Heart right ventricle (tissue), 16 donors: ENCODE measurements at regions of chr14 and their contacts with region 1.

Region 1: GRCh38 chr14:67695394-67695949 is at the start of gene RDH11:
- DNase-seq: peak; percentile 73 to 86
- ATAC-seq: peak; percentile 97 to 99 (median 99)
- H3K4me3 ChIP-seq: peak within 1 kb of the TSS; percentile 42 to 93 (median 85)
- H3K27ac ChIP-seq: peak within 1 kb of the TSS in 9 of 10 donors; percentile 42 to 83 (median 75)
- H3K4me1 ChIP-seq: peaks cover 0 to 22% (median 4%) of the 10 kb centered on the region in 9 donors
- H3K27me3 ChIP-seq: no peaks in the 10 kb centered on the region
- CTCF ChIP-seq: no peak
- total RNA-seq, gene RDH11: 9.6 to 19.8 (median 14.7) TPM

Region 2: GRCh38 chr14:67541448-67542387 is 153.8 kb before region 1 on chr14:
- intact Hi-C with region 1: no loop called
- DNase-seq: no peak
- ATAC-seq: no peak
- H3K4me3 ChIP-seq: no peak overlapping the region
- H3K27ac ChIP-seq: no peak overlapping the region
- H3K4me1 ChIP-seq: peaks cover 0 to 4% (median 0%) of the 10 kb centered on the region in 9 donors
- H3K27me3 ChIP-seq: peaks cover 0 to 26% (median 0%) of the 10 kb centered on the region in 7 donors
- CTCF ChIP-seq: no peak

Region 3: DNA sequence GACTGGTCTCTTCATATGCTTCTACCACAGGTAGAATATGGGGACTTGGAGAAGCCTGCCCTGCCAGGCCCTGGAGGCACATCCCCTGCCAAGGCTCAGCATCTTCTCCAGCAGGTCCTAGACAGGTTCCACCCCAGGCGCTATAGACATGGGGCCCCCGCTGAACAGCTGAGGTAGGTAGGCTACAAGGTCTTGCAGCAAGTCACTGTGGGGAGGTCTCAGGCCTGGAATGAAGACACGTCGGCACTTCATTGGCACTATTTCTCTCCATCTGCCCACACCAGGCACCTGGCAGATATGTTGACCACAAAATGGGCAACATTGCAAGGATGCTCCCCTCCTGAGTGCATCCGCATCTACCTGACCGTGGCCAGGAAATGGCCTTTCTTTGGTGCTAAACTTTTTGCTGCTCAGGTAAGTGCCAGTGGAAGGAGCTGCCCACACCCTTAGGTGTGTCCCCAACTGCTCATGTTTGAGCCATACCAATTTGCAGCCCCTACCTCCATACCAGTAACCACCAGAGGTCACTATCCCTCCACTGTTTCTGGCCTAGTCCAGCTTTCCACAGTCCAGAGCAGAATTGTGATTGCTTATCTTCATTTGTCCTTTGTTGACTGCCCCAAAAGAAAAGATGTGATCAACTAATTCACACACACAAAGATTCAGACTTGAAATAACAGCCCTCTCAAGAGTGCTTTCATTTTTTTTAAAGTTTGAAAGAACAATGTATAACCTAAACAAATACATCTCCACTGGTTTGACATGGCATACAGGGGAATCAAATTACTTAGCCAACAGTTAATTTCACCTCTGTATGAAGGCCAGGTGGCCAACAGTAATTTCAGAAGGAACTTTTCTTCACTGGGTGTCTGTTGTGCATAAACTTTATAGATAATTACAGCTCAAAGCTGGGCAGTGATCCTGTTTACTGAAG is 111.5 kb before region 1 on chr14:
- intact Hi-C with region 1: loop called in 6 of 10 experiments (anchors 5 to 10 kb)
- DNase-seq: peak in 1 of 2 donors; percentile 32
- ATAC-seq: peak; percentile 53 to 84 (median 78)
- H3K4me3 ChIP-seq: no peak overlapping the region
- H3K27ac ChIP-seq: no peak overlapping the region
- H3K4me1 ChIP-seq: no peaks in the 10 kb centered on the region
- H3K27me3 ChIP-seq: no peaks in the 10 kb centered on the region
- CTCF ChIP-seq: peak; percentile 33 to 70 (median 63)

Region 4: GRCh38 chr14:67619446-67620216 is 75.8 kb before region 1 on chr14 and contains the start of gene ARG2:
- intact Hi-C with region 1: loop called in 5 of 10 experiments (anchors 5 to 10 kb)
- DNase-seq: peak; percentile 95 to 97
- ATAC-seq: peak; percentile 97 to 99 (median 99)
- H3K4me3 ChIP-seq: peak within 1 kb of the TSS; percentile 36 to 74 (median 68)
- H3K27ac ChIP-seq: peak within 1 kb of the TSS in 5 of 10 donors; percentile 16 to 55 (median 54)
- H3K4me1 ChIP-seq: peaks cover 0 to 36% (median 12%) of the 10 kb centered on the region in 9 donors
- H3K27me3 ChIP-seq: peaks cover 0 to 5% (median 0%) of the 10 kb centered on the region in 7 donors
- CTCF ChIP-seq: peak in 3 of 9 donors; percentile 21 to 31 (median 28)
- total RNA-seq, gene ARG2: 0.69 to 11.6 (median 1.5) TPM

Region 5: GRCh38 chr14:67674481-67675169 is 20.8 kb before region 1 on chr14 and contains the start of gene VTI1B:
- intact Hi-C with region 1: loop called in 1 of 10 experiments (anchors 2 kb)
- DNase-seq: peak; percentile 84 to 85
- ATAC-seq: peak; percentile 96 to 98 (median 96)
- H3K4me3 ChIP-seq: peak within 1 kb of the TSS; percentile 79 to 99 (median 95)
- H3K27ac ChIP-seq: peak within 1 kb of the TSS; percentile 96 to 100 (median 100)
- H3K4me1 ChIP-seq: peaks cover 7 to 34% (median 25%) of the 10 kb centered on the region in 9 donors
- H3K27me3 ChIP-seq: no peaks in the 10 kb centered on the region
- CTCF ChIP-seq: peak in 4 of 9 donors; percentile 22 to 46 (median 42)
- total RNA-seq, gene VTI1B: 110 to 153 (median 125) TPM

Region 6: DNA sequence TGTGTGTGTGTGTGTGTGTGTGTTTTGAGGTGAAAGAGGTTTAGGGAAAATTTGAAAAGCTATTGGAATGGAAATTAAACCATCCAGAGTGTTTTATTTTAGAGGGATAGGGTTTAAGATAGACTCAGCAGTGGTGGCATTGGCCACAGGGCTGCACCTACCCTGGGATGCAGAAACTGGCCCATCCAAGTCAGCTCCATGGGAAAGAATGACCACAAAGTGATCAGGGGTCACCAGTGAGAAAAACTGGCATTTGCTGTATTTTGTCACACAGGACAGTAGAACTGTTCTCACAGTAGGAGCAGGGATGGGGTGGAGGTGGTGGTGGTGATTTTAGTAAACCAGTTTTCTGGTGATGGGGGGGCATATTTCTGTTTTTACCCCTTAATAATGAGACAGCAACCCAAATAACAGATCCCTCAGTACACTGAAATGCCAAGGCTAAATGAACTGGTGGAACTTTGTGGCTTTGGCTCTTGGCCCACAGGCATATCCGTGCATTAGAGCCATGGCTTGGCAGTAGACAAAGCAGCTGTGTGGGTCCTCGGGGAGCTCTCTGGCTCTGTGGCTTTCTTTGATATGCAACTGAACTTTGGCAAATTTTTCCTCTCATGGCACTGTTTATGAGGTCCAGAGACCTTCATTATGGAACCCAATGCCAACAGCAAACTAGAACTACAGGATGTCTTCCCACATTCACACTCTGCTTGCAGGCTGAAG is 749.1 kb after region 1 on chr14:
- intact Hi-C with region 1: no loop called
- DNase-seq: peak; percentile 25 to 43
- ATAC-seq: peak in 7 of 8 donors; percentile 44 to 76 (median 61)
- H3K4me3 ChIP-seq: no peak overlapping the region
- H3K27ac ChIP-seq: peak overlapping the region in 1 of 10 donors; percentile 53
- H3K4me1 ChIP-seq: peaks cover 0 to 21% (median 11%) of the 10 kb centered on the region in 9 donors
- H3K27me3 ChIP-seq: no peaks in the 10 kb centered on the region
- CTCF ChIP-seq: no peak